ENCODE measurements at regions of chr1 and their contacts with region 1.

Region 1: GRCh38 chr1:18597160-18598042 is 33.2 kb upstream of the PAX7 start:
- DNase-seq: peak; percentile 76
- ATAC-seq: peak; percentile 90
- H3K4me3 ChIP-seq: no peak overlapping the region
- H3K27ac ChIP-seq: no peak overlapping the region
- H3K4me1 ChIP-seq: no peaks in the 10 kb centered on the region
- H3K27me3 ChIP-seq: peaks cover 27% of the 10 kb centered on the region
- CTCF ChIP-seq: peak; percentile 91

Region 2: GRCh38 chr1:18373882-18374493 is 223.4 kb before region 1 on chr1:
- intact Hi-C with region 1: no loop called
- DNase-seq: peak; percentile 56
- ATAC-seq: peak; percentile 31
- H3K4me3 ChIP-seq: no peak overlapping the region
- H3K27ac ChIP-seq: no peak overlapping the region
- H3K4me1 ChIP-seq: no peaks in the 10 kb centered on the region
- H3K27me3 ChIP-seq: no peaks in the 10 kb centered on the region
- CTCF ChIP-seq: peak; percentile 23

Region 3: GRCh38 chr1:18385239-18385790 is 212.1 kb before region 1 on chr1:
- intact Hi-C with region 1: no loop called
- DNase-seq: no peak
- ATAC-seq: no peak
- H3K4me3 ChIP-seq: no peak overlapping the region
- H3K27ac ChIP-seq: no peak overlapping the region
- H3K4me1 ChIP-seq: no peaks in the 10 kb centered on the region
- H3K27me3 ChIP-seq: no peaks in the 10 kb centered on the region
- CTCF ChIP-seq: no peak

Region 4: GRCh38 chr1:18429654-18430053 is 167.7 kb before region 1 on chr1:
- intact Hi-C with region 1: no loop called
- DNase-seq: no peak
- ATAC-seq: no peak
- H3K4me3 ChIP-seq: no peak overlapping the region
- H3K27ac ChIP-seq: no peak overlapping the region
- H3K4me1 ChIP-seq: no peaks in the 10 kb centered on the region
- H3K27me3 ChIP-seq: peaks cover 3% of the 10 kb centered on the region
- CTCF ChIP-seq: no peak

Region 5: GRCh38 chr1:18491168-18491567 is 106.2 kb before region 1 on chr1:
- intact Hi-C with region 1: no loop called
- DNase-seq: no peak
- ATAC-seq: peak; percentile 56
- H3K4me3 ChIP-seq: no peak overlapping the region
- H3K27ac ChIP-seq: no peak overlapping the region
- H3K4me1 ChIP-seq: no peaks in the 10 kb centered on the region
- H3K27me3 ChIP-seq: no peaks in the 10 kb centered on the region
- CTCF ChIP-seq: no peak

Region 6: DNA sequence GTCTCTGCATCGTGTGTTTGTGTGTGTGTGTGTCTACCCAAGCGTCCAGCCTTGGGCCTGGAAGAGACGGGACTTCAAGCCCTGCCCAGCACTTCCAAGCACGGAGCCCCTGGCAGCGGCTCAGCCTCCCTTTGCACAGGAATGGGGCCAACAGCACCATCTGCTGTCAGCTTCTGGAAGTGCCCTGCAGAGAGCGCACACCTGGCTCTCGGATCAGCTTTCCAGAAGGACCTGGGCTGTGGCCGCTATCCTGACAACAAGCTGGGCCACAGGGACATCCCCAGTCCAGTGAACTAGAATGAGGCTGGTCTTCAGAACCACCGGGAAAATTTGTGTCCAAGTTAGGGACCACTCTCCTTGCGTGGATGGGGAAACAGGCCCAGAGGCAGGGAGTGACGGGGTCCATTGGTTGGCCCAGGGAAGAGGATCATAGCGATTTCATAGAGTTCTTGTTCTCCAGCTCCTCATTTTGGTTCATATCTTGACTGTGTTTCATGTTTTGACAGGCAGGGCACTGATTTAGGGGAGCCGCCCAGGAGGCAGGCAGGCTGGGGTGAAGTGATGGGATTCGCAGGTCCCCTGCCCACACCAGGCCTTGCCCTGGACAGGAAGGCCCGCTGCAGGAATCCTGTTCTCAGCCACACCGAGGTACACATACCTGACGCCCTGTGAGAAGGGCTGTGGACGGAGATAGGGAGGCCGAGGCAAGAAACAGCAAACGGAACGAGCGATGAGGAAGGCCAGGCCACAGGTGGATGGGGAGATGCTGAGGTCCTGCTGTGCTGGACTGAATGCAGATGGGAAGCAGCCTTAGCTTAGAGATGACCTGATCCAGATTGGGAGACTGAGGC is 223.6 kb after region 1 on chr1:
- intact Hi-C with region 1: loop called (anchors 5 kb)
- DNase-seq: peak; percentile 84
- ATAC-seq: peak; percentile 91
- H3K4me3 ChIP-seq: no peak overlapping the region
- H3K27ac ChIP-seq: no peak overlapping the region
- H3K4me1 ChIP-seq: no peaks in the 10 kb centered on the region
- H3K27me3 ChIP-seq: peaks cover 30% of the 10 kb centered on the region
- CTCF ChIP-seq: peak; percentile 81

Region 7: GRCh38 chr1:18875107-18875795 is 277.9 kb after region 1 on chr1:
- intact Hi-C with region 1: loop called (anchors 10 kb)
- DNase-seq: peak; percentile 91
- ATAC-seq: peak; percentile 89
- H3K4me3 ChIP-seq: no peak overlapping the region
- H3K27ac ChIP-seq: no peak overlapping the region
- H3K4me1 ChIP-seq: no peaks in the 10 kb centered on the region
- H3K27me3 ChIP-seq: no peaks in the 10 kb centered on the region
- CTCF ChIP-seq: peak; percentile 86